Sigmoid colon (tissue), 7 donors: ENCODE measurements at regions of chr11 and their contacts with region 1.

Region 1: DNA sequence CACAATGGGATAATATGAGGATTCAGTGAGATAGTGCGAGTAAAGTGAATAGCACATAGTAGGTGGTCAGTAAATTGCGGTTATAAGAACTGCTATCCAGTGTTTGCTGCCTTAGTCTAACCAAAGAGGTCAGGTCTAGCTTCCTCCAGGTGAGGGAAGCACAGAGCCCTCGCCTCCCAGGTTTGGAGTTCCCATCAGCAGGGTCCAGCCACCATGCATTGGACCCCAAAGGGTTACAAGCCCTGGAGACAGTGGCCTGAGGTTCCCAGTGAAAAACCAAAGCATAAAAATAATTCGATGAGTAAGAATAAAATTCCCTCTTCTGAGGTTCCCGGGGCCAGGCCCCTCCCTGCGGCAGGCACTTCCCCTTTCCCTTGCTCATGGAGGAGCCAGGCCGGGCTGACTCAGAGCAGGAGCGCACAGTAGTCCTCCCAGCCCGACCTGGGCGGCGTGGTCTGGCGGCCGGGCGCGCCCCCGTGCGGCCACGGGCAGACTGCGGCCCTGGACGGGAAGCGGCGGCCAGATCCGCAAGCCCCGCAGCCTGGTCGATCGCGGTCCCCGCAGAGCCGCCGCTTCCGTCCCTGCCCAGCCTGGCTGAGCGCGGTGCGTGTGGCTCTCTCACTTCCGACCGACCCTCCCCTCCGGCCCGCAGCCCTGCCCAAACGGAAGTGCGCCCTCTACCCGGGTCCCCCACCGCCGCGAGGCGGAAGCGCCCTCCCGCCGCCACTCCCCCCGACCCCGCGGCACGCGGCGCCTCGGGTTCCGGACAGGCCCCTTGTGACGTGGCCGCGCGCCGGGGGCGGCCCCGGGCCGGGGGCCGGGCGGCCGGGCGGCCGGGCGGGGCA is at the start of gene SLC39A13:
- DNase-seq: peak; percentile 98
- H3K4me3 ChIP-seq: peak within 1 kb of the TSS; percentile 61 to 85 (median 77)
- H3K27ac ChIP-seq: peak within 1 kb of the TSS; percentile 84 to 96 (median 95)
- H3K4me1 ChIP-seq: peaks cover 0 to 44% (median 29%) of the 10 kb centered on the region in 4 donors
- H3K27me3 ChIP-seq: no peaks in the 10 kb centered on the region
- CTCF ChIP-seq: peak; percentile 30 to 75 (median 63)
- EP300 ChIP-seq: peak in 1 of 4 donors; percentile 20
- POLR2A ChIP-seq: peak; percentile 57 to 58
- total RNA-seq, gene SLC39A13: 38.2 to 87.5 (median 54.0) TPM

Region 2: DNA sequence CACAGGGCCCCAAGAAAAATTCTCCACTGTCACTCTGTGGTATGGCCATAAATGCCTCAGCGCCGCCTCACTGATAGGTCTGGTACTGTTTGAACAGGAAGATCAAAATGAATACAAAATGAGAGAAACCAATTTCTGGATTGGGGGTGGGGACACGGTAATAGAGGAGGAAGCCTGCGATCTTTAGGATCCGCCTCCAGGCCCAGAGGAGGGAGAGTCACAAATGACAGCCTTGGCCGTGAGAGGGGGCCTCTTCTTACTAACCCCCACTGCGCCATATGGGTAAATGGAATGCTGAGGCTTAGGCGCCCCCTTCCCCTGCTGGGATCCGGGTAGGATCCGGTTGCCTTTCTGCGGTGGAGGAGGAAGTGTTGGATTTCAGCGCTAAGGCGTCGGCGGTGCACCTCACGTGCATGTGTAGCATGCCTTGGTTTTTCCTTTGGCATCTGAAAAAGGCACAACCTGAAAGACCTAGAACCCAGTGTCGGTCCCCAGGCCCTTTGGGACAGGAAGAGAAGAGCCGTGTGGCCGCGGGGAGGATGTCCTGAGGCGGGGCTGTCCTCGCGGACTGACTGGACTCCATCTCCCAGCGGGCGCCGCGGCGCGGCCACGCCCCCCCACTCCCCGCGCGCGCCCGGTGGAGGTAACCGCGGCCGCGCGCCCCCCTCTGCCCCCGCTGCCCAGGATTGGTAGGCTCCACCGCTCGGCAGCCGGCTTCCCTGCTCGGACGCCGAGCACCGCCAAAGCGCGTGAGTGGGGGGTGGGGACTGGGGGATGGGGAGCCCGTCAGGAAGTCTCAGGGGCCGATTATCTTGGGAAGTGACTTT is 138.8 kb before region 1 on chr11:
- intact Hi-C with region 1: loop called (anchors 5 kb)
- DNase-seq: peak; percentile 97
- H3K4me3 ChIP-seq: peak overlapping the region; percentile 77 to 94 (median 92)
- H3K27ac ChIP-seq: peak overlapping the region; percentile 95 to 98 (median 96)
- H3K4me1 ChIP-seq: peaks cover 0 to 40% (median 38%) of the 10 kb centered on the region in 4 donors
- H3K27me3 ChIP-seq: no peaks in the 10 kb centered on the region
- CTCF ChIP-seq: peak in 1 of 4 experiments; percentile 12
- EP300 ChIP-seq: no peak
- POLR2A ChIP-seq: peak in 1 of 2 donors; percentile 41

Region 3: GRCh38 chr11:47426061-47426956 is 18.3 kb after region 1 on chr11 and contains the start of gene PSMC3:
- intact Hi-C with region 1: loop called (anchors 1 kb)
- DNase-seq: peak; percentile 99
- H3K4me3 ChIP-seq: peak within 1 kb of the TSS; percentile 86 to 97 (median 91)
- H3K27ac ChIP-seq: peak within 1 kb of the TSS; percentile 91 to 95 (median 92)
- H3K4me1 ChIP-seq: peaks cover 0 to 23% (median 19%) of the 10 kb centered on the region in 4 donors
- H3K27me3 ChIP-seq: no peaks in the 10 kb centered on the region
- CTCF ChIP-seq: no peak
- EP300 ChIP-seq: no peak
- POLR2A ChIP-seq: peak; percentile 52 to 65
- total RNA-seq, gene PSMC3: 104 to 202 (median 178) TPM

Region 4: DNA sequence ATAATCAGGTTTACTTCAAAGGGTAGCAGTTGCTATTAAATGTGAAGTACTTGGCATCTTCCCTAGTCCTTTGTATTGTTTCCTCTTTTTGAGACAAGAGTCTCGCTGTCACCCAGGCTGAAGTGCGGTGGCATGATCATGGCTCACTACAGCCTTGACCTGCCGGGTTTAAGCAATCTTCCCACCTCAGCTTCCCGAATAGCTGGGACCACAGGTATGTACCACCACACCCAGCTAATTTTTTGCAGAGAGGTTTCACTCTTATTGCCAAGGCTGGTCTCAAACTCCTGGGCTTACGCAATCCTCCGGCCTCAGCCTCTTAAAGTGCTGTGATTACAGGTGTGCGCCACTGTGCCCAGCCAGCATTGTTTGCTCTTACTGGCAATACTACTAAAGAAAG is 77.1 kb after region 1 on chr11:
- intact Hi-C with region 1: no loop called
- DNase-seq: no peak
- H3K4me3 ChIP-seq: no peak overlapping the region
- H3K27ac ChIP-seq: no peak overlapping the region
- H3K4me1 ChIP-seq: peaks cover 0 to 21% (median 7%) of the 10 kb centered on the region in 4 donors
- H3K27me3 ChIP-seq: no peaks in the 10 kb centered on the region
- CTCF ChIP-seq: no peak
- EP300 ChIP-seq: no peak
- POLR2A ChIP-seq: no peak

Region 5: DNA sequence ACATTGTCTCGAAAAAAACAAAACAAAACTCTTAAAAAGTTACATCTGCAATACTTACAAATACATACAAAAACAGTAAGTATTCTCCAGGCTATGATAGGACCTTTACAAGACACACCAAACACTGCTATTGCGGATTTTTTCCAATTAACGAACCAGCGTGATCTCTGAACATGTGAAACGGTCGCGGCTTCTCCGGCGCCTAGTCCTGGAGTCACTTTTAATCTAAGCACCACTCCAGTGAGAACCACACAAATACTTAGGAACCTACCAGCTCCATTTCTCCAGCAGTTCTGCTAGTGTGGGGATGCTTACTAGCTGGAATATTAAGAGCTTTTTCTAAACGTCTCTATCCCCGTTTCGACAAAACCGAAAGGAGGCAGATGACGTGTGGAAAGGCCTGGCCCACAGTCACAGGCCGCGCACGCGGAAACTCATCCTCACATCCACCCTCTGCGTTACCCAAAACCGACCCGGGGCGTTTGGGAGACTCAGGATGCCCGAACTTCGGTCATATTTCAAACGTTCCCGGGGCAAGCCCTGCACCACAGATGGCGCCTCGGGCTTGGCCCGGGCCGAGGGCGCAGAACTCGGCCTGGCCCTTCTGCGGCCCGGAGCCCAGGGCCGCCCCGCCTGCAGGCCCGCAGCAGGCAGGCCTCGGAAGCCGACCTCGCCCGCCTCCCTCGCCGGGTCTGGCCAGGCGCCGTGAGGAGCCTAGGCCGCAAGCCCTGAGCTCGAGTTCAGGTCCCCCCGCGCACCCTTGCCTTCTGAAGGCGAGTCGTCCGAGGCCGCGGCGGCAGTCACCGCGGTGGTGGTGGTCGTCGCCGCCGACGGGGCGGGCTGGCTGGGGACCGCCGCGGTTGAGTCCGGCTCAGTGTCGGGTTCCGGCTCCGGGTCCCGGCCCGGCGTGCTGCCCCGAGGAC is 358.6 kb after region 1 on chr11:
- intact Hi-C with region 1: loop called (anchors 5 kb)
- DNase-seq: peak; percentile 87
- H3K4me3 ChIP-seq: peak overlapping the region; percentile 54 to 97 (median 86)
- H3K27ac ChIP-seq: peak overlapping the region; percentile 98 to 100 (median 99)
- H3K4me1 ChIP-seq: peaks cover 0 to 33% (median 27%) of the 10 kb centered on the region in 4 donors
- H3K27me3 ChIP-seq: no peaks in the 10 kb centered on the region
- CTCF ChIP-seq: no peak
- EP300 ChIP-seq: no peak
- POLR2A ChIP-seq: no peak